ENCODE measurements at regions of chr7 and their contacts with region 1.

Region 1: DNA sequence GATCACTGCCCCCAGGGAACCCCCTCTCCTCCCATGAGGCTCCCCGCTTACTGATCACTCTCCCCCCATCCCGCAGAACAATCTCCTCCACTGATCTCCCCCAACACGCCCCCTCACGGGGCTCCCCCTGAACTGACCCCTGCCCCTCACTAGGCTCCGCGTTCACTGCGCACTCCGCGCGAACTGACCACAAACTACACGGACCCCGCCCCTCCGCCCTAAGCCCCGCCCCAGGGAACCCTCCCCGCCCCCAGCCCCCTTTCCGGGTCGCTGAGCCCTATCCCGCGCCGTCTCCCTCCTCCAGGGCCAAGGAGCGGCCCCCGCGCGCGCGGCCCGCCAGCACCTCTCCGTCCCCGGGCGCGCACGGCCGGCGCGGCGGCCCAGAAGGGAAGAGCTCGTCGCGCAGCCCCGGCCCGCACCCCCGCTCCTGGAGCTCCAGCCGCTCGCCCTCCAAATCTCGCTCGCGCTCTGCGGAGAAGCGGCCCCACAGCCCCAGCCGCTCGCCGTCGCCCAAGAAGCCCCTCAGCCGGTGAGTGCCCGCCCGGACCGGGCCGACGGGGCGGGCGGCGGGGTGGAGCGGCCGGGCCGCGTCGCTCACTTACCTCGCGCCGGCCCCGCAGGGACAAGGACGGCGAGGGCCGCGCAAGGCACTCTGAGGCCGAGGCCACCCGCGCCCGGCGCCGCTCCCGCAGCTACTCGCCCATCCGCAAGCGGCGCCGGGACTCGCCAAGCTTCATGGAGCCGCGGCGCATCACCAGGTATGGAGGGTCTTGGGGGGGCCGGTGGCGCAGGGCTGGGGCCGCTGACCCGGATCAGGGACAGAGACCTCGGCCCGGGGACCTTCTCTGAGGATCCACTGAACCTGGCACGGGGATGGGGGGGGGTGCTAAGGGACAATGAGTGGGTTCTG is 19.9 kb upstream of the HSPB1 start:
- DNase-seq: peak in 1 of 2 donors; percentile 84
- ATAC-seq: peak; percentile 61
- H3K4me3 ChIP-seq: peak overlapping the region; percentile 33 to 40
- H3K27ac ChIP-seq: no peak overlapping the region
- H3K4me1 ChIP-seq: no peaks in the 10 kb centered on the region
- H3K27me3 ChIP-seq: no peaks in the 10 kb centered on the region

Region 2: DNA sequence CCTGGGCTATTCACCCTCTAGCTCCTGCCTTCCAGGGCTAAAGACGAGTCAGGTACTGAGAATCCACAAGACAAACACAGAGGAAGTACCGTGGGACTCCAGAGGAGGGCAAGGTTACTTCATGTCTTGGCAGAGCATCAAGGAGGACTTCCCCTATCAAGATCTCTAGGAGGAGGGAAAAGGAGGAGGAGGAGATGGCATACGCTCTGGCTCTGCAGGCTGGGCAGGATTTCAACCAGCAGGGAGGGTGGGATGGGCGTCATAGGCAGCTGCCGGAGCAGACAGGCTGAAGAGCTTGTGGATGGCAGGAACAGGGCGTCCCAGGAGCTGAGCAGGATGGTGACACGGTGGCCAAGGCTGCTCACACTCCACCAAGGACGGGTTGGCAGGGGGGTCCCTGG is 213.4 kb before region 1 on chr7:
- intact Hi-C with region 1: no loop called
- DNase-seq: no peak
- ATAC-seq: peak; percentile 49
- H3K4me3 ChIP-seq: no peak overlapping the region
- H3K27ac ChIP-seq: no peak overlapping the region
- H3K4me1 ChIP-seq: no peaks in the 10 kb centered on the region
- H3K27me3 ChIP-seq: no peaks in the 10 kb centered on the region

Region 3: DNA sequence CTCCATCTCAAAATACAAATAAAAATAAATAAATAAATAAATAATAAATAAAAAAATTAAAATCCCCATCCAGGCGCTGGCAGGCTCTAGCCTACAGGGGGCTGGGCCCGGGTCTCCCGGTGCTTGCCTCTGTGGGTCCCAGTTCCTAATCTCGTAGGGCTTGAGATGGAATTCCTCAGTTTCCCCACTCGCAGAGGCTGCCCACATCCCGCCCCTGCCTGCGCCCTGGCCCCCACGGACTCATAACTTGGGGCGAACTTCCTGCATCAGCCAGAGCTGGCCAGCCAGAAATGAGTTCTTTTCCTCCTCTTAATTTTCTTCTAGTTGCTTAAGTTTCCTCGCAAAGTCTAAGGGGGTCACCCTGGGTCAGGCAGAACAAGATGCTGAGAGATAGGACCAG is 102.9 kb before region 1 on chr7:
- intact Hi-C with region 1: loop called (anchors 5 to 10 kb)
- DNase-seq: no peak
- ATAC-seq: no peak
- H3K4me3 ChIP-seq: no peak overlapping the region
- H3K27ac ChIP-seq: no peak overlapping the region
- H3K4me1 ChIP-seq: no peaks in the 10 kb centered on the region
- H3K27me3 ChIP-seq: no peaks in the 10 kb centered on the region